ENCODE measurements at regions of chr17 and their contacts with region 1.

Region 1: DNA sequence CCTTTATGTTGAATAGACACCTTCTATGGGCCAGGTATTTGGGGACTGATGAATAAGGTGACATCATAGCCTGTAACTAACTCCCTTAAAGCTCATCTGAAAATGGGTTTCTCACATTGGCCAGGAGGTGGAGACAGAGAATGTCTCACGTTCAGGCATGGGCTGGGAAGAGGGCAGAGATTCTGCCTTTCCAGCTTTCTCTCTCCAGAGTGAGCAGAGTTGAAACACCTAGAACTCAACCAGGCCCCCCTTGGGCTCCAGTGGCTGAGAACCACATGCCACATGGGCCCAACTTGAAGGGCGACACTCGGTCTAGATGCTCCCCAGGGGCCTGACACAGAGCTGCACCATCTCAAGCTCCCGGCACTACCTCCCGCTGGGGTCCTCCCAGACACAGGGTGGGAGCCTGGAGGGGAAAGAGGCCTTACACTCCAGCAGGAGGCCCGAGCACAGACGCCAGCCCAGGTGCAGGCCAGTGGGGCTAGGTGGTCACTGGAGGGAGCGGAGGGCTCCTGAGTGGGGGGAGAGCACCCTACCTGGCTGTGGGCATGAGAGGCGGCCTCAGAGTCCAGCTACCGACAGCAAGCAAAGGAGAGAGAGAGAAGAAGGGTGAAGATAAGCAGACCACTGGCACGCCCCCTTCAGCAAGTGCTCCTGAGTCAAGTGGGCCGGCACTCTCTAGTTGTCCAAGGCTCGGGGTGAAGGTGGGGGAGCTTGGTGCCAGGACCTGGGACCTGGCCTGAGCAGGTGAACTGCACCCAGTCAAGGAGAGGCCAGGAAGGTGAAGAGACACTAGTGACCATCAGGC is 55.9 kb downstream of the MYO18A start:
- DNase-seq: no peak
- ATAC-seq: peak; percentile 68 to 73
- H3K4me3 ChIP-seq: no peak overlapping the region
- H3K27ac ChIP-seq: peak overlapping the region; percentile 92 to 98 (median 96)
- H3K4me1 ChIP-seq: peaks cover 43 to 49% of the 10 kb centered on the region in 2 donors
- H3K27me3 ChIP-seq: no peaks in the 10 kb centered on the region
- CTCF ChIP-seq: peak; percentile 59 to 67 (median 63)
- POLR2A ChIP-seq: no peak

Region 2: DNA sequence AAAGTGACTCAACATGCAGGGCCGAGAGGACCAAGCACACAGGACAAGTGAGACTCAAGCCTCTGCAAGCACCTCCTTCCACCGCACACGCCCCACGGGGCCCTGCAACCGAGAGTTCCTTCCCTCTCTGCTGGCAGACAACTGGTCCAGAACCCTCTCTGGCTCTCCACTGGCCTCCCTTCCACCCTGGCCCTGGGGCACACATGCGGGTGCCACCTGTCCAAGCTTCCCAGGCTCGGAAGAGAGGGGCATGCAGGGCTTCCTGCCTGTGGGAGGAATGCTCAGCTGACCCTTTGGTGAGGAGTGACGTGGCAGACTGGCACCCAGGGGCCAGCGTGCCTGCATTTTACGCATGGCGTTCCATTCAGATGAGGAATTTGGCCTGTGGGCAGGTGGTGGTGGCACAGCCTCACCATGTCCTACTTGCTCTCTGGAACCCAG is 21.6 kb before region 1 on chr17:
- in situ Hi-C with region 1: no loop called
- intact Hi-C with region 1: no loop called
- DNase-seq: peak in 1 of 2 donors; percentile 57
- ATAC-seq: peak in 1 of 2 donors; percentile 37
- H3K4me3 ChIP-seq: no peak overlapping the region
- H3K27ac ChIP-seq: peak overlapping the region; percentile 44 to 70 (median 59)
- H3K4me1 ChIP-seq: peaks cover 18 to 21% of the 10 kb centered on the region in 2 donors
- H3K27me3 ChIP-seq: no peaks in the 10 kb centered on the region
- CTCF ChIP-seq: no peak
- POLR2A ChIP-seq: no peak

Region 3: DNA sequence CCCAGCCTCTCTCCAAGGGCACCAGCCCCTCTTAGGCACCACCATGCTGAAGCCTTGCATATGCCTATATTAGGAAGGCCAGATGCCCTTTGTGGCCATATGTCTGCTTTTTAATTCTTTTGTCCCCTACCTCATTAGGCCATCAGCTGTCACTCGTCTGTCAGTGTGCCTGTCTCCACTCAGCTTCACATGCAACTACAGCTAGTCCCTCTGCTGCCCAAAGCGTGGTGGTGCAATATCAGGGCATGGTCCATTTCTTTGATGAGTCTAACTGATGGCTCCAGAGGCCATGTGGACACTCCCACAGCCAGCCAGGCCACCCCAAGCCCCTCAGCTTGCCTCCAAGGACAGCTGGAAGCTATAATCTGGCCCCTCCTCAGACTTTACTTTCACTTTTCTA is 19.6 kb after region 1 on chr17:
- in situ Hi-C with region 1: no loop called
- intact Hi-C with region 1: loop called (anchors 1 kb)
- DNase-seq: peak in 1 of 2 donors; percentile 82
- ATAC-seq: peak in 1 of 2 donors; percentile 34
- H3K4me3 ChIP-seq: no peak overlapping the region
- H3K27ac ChIP-seq: peak overlapping the region; percentile 76 to 98 (median 90)
- H3K4me1 ChIP-seq: peaks cover 44 to 53% of the 10 kb centered on the region in 2 donors
- H3K27me3 ChIP-seq: no peaks in the 10 kb centered on the region
- CTCF ChIP-seq: peak; percentile 44 to 51 (median 48)
- POLR2A ChIP-seq: no peak

Measured in gastrocnemius medialis (tissue), 4 donors.